Activated naive CD4-positive, alpha-beta T cell treated with anti-CD3 and anti-CD28 coated beads, Interleukin-2, amount 10 ng/mL, durations not matched to agents 7 days and 5 days (primary cell): ENCODE measurements at regions of chr11 and their contacts with region 1.

Region 1: DNA sequence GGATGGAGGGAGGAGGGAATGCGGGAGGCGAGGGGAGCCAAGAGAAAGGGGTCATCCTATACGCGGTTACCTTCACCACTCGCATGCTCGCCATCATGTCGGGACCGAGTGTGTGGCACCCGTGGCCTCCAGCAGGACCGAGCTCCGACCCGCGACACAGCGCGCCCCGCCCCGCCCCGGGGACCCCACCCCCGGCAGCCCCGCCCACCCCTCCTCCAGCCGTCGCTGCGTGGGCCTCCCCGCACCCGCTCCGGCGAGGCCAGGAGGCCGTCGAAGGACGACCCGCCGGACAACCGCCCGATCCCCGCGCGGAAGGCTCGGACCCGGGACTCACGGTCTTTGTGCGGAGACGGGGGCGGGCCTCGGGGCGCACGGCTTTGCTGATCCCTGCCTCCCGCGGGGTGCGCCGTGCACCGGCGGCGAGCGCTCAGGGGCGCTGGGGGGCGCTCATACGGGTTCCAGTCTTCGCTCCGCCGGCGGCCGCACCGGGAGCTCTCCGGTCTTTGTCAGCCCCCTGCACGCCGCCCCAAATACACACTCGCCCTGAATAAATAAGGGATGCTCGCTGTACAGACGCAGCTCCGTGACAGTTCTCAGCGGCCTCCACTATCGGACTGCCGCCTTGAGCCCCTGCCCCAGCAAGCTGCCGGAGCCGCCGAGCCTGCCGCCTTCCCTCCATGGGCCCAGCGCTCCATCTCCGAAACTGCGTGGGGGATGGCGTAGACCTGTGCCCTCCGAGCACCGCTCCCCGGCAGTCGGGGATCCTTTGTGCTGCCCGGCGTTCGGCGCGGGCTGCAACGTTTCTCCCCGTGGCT is at the start of gene UBE2L6:
- DNase-seq: peak; percentile 92
- H3K4me3 Mint-ChIP-seq: peak within 1 kb of the TSS; percentile 100
- H3K27ac Mint-ChIP-seq: peak within 1 kb of the TSS; percentile 99
- H3K4me1 Mint-ChIP-seq: peaks cover 54% of the 10 kb centered on the region
- H3K27me3 Mint-ChIP-seq: peaks cover 8% of the 10 kb centered on the region

Region 2: GRCh38 chr11:57637626-57638004 is 69.9 kb after region 1 on chr11:
- CTCF ChIA-PET with region 1: interaction called, 266 read pairs
- DNase-seq: no peak
- H3K4me3 Mint-ChIP-seq: peak overlapping the region; percentile 83
- H3K27ac Mint-ChIP-seq: no peak overlapping the region
- H3K4me1 Mint-ChIP-seq: peaks cover 28% of the 10 kb centered on the region
- H3K27me3 Mint-ChIP-seq: peaks cover 76% of the 10 kb centered on the region